Dorsolateral prefrontal cortex (tissue), 120 donors: ENCODE measurements at regions of chr12 and their contacts with region 1.

Region 1: DNA sequence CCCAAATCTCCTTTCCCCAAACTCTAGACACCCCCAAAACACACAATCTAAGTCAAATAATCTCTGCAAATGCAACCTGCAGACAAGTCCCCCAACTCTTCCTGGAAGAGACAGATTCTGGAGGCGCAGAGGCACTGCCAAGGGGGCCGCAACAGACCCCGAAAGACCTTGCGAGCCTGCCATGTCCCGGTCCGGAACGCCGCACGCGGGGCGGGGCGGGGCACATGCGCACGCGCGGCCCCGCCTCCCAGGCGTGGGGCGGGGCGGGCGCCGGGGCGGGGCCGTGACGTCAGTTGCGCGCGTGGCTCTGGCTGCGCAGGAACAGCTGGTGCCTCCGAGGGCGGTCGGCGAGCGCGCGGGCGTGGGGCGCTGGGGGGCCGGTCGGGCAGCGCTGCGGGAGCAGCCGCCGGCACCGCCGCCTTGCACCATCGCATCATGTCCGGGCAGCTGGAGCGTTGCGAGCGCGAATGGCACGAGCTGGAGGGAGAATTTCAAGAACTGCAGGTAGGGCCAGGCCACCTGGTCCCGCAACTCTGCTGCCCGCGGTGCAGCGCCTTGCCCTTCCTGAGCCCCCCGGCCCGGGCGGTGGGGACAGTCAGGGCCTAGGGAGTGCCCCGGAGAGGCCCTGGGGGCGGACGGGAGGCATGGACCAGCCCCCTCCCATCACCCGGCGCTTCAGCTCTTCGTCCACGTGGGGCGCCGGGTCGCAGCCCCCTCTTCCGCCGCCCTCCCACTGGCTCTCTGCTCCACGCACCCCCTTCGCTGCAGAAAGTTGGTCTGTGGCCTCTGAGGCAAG is at the start of gene TMEM120B:
- DNase-seq: peak; percentile 72 to 93 (median 85)
- H3K4me3 ChIP-seq: peak within 1 kb of the TSS; percentile 62 to 99 (median 96)
- H3K27ac ChIP-seq: peak within 1 kb of the TSS in 48 of 59 donors; percentile 16 to 88 (median 70)
- H3K27me3 ChIP-seq: no peaks in the 10 kb centered on the region
- CTCF ChIP-seq: peak in 4 of 56 donors; percentile 11 to 17 (median 13)
- total RNA-seq, gene TMEM120B: 10.0 to 30.1 (median 19.2) TPM

Region 2: GRCh38 chr12:121688966-121689365 is 23.7 kb before region 1 on chr12:
- intact Hi-C with region 1: loop called in 1 of 2 experiments (anchors 1 kb)
- DNase-seq: no peak
- H3K4me3 ChIP-seq: no peak overlapping the region
- H3K27ac ChIP-seq: no peak overlapping the region
- H3K27me3 ChIP-seq: no peaks in the 10 kb centered on the region
- CTCF ChIP-seq: no peak

Region 3: DNA sequence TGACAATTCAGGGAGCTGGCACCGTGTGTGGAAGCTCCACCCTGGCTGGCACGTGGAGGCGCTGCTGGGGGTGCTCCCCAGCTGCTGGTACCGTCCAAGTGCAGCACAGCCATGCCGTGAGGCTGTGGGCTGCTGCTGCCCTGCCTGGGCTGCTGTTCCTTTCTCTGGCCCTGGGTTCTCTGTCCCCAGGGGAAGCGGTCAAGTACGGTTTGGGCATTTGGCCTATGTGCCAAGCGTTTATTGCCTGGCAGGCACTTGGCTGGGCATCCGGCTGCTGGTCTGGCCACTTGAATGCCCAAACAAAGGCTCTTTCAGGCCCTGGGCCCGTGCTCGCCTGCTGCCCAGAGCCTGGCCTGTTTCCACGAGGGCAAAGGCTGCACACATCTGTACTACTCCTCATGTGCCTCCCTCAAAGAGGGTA is 41.2 kb after region 1 on chr12:
- intact Hi-C with region 1: loop called in 1 of 2 experiments (anchors 5 kb)
- DNase-seq: peak; percentile 59 to 89 (median 87)
- H3K4me3 ChIP-seq: peak overlapping the region in 1 of 59 donors; percentile 0
- H3K27ac ChIP-seq: peak overlapping the region in 7 of 59 donors; percentile 10 to 67 (median 48)
- H3K27me3 ChIP-seq: no peaks in the 10 kb centered on the region
- CTCF ChIP-seq: peak in 17 of 56 donors; percentile 5 to 47 (median 27)